Breast epithelium (tissue), 4 donors: ENCODE measurements at regions of chr19 and their contacts with region 1.

Region 1: GRCh38 chr19:50870417-50871089 is 2.7 kb upstream of the KLK2 start:
- DNase-seq: no peak
- H3K4me3 ChIP-seq: no peak overlapping the region
- H3K27ac ChIP-seq: no peak overlapping the region
- H3K4me1 ChIP-seq: no peaks in the 10 kb centered on the region
- H3K27me3 ChIP-seq: peaks cover 0 to 45% of the 10 kb centered on the region in 2 donors
- CTCF ChIP-seq: no peak
- POLR2A ChIP-seq: no peak

Region 2: DNA sequence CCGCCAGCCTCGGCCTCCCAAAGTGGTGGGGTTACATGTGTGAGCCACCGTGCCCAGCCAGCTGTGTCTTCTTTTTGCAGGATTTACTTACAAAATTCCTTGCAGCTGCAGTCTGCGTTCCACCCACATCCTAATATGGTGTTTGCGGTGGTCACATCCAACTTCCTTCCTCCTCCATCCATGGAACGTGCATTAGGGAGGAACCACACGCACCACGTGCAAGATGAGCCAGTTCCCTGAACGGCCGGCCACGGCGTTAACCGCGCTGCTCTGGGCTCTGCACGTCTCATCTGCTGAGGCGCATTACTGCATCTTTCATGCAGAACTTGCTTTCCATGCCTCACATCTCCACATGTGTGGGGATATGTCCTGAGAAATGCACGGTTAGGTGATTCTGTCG is 896.6 kb before region 1 on chr19:
- intact Hi-C with region 1: no loop called
- DNase-seq: no peak
- H3K4me3 ChIP-seq: no peak overlapping the region
- H3K27ac ChIP-seq: no peak overlapping the region
- H3K4me1 ChIP-seq: no peaks in the 10 kb centered on the region
- H3K27me3 ChIP-seq: peaks cover 0 to 4% of the 10 kb centered on the region in 2 donors
- CTCF ChIP-seq: no peak
- POLR2A ChIP-seq: no peak

Region 3: GRCh38 chr19:50465986-50466771 is 404.4 kb before region 1 on chr19:
- intact Hi-C with region 1: loop called (anchors 5 kb)
- DNase-seq: no peak
- H3K4me3 ChIP-seq: no peak overlapping the region
- H3K27ac ChIP-seq: no peak overlapping the region
- H3K4me1 ChIP-seq: no peaks in the 10 kb centered on the region
- H3K27me3 ChIP-seq: peaks cover 0 to 9% of the 10 kb centered on the region in 2 donors
- CTCF ChIP-seq: no peak
- POLR2A ChIP-seq: no peak

Region 4: GRCh38 chr19:50893047-50893737 is 22.6 kb after region 1 on chr19:
- intact Hi-C with region 1: loop called (anchors 1 kb)
- DNase-seq: no peak
- H3K4me3 ChIP-seq: no peak overlapping the region
- H3K27ac ChIP-seq: no peak overlapping the region
- H3K4me1 ChIP-seq: no peaks in the 10 kb centered on the region
- H3K27me3 ChIP-seq: peaks cover 0 to 5% of the 10 kb centered on the region in 2 donors
- CTCF ChIP-seq: no peak
- POLR2A ChIP-seq: no peak